MCF 10A (cell line): ENCODE measurements at regions of chr3 and their contacts with region 1.

Region 1: GRCh38 chr3:88113311-88114162 is 36.2 kb upstream of the C3orf38 start:
- DNase-seq: peak; percentile 81
- H3K4me3 Mint-ChIP-seq: no peak overlapping the region
- H3K27ac Mint-ChIP-seq: peak overlapping the region; percentile 23
- H3K4me1 Mint-ChIP-seq: peaks cover 17% of the 10 kb centered on the region
- H3K27me3 Mint-ChIP-seq: no peaks in the 10 kb centered on the region
- CTCF ChIP-seq: peak; percentile 58

Region 2: DNA sequence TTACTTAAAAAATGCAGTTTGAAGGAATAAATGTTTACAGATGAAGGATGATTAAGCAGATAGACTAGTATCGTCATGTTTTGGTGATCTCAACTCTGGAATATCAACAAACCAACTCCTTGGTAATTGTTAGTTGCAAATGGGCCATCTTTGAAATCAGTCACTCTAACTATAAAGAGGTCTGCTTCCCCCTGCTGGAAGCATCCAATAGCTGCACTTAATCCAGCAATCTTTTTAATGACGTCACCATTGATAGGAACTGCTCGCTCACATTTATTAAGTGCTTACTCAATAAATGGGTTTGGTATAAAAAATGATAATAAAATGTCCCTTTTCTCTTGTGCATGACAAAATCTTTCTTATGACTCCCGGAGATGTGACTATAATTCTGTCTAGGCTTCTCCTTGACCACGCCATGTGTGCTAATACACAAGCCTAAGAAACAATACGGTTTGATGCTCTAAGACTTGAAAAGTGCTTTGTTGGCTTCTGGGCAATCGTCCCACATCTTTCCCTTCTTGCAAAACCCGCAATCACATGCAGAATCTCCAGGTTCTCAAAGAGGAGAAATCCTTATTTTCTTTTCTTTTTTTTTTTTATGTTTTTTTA is 609.5 kb before region 1 on chr3:
- CTCF ChIA-PET with region 1: interaction called, 3 read pairs
- POLR2A ChIA-PET with region 1: no interaction called
- intact Hi-C with region 1: loop called (anchors 10 kb)
- DNase-seq: peak; percentile 81
- H3K4me3 Mint-ChIP-seq: no peak overlapping the region
- H3K27ac Mint-ChIP-seq: no peak overlapping the region
- H3K4me1 Mint-ChIP-seq: no peaks in the 10 kb centered on the region
- H3K27me3 Mint-ChIP-seq: no peaks in the 10 kb centered on the region
- CTCF ChIP-seq: peak; percentile 70

Region 3: DNA sequence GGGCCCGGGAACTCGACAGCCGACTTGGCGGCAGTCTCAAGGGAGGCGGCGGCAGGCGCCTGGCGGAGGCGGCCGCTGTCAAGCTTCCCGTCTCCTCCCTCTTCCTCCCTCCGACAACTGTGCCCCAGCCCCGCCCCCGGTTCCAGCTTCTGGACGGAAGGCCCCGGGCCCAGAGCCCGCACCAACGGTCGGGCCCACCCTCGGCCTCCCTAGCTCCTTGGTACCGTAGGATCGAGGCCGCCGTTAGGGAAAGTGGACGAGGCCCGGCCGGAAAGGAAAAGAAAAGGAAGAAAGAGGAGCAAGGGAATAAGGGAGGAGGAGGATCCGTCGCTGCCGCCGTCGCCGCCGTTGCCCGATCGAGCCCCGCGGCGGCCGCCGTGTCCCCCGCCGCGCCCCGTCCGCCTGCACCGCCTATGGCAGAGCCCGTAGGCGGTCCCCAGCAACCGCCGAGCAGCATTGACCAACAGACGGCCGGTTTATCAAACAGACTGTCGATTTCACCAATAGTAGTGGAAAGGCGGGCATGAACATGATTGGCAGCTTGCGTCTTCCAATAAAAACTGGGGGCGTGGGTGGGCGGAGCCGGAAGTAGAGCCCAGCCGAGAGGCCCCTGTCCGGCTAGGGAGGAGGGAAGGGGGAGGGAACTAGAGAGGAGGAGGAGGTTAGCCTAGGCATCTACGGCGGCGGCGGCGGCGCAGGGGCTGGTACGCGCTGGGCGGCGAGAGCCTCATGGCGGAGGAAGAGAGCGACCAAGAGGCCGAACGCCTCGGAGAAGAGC is 54.8 kb before region 1 on chr3 and contains the starts of genes CGGBP1 and ZNF654:
- CTCF ChIA-PET with region 1: interaction called, 5 read pairs
- POLR2A ChIA-PET with region 1: interaction called, 30 read pairs
- intact Hi-C with region 1: loop called (anchors 1 kb)
- DNase-seq: peak; percentile 99
- H3K4me3 Mint-ChIP-seq: peak within 1 kb of the TSS; percentile 97
- H3K27ac Mint-ChIP-seq: peak within 1 kb of the TSS; percentile 94
- H3K4me1 Mint-ChIP-seq: peaks cover 11% of the 10 kb centered on the region
- H3K27me3 Mint-ChIP-seq: no peaks in the 10 kb centered on the region
- CTCF ChIP-seq: no peak
- total RNA-seq, gene CGGBP1: 83.4 and 96.6 TPM in 2 replicates
- total RNA-seq, gene ZNF654: 10.4 and 12.4 TPM in 2 replicates

Region 4: DNA sequence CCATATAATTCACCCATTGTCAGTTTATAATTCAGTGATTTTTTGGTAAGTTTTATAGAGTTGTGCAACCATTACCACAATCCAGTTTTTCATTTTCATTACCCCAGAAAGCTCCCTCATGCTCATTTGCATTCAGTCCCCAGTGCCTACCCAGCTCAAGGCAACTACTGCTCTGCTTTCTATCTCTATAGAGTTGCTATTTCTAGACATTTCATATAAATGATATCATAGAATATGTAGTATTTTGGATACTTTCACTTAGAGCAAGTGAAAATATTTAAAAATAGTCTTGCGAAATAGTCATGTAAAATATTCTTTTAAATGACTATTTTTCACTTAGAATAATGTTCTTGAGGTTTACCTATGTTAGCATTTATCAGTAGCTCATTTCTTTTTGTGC is 12.4 kb before region 1 on chr3:
- CTCF ChIA-PET with region 1: interaction called, 12 read pairs
- POLR2A ChIA-PET with region 1: no interaction called
- intact Hi-C with region 1: no loop called
- DNase-seq: no peak
- H3K4me3 Mint-ChIP-seq: no peak overlapping the region
- H3K27ac Mint-ChIP-seq: no peak overlapping the region
- H3K4me1 Mint-ChIP-seq: peaks cover 11% of the 10 kb centered on the region
- H3K27me3 Mint-ChIP-seq: no peaks in the 10 kb centered on the region
- CTCF ChIP-seq: no peak

Region 5: GRCh38 chr3:88896026-88896425 is 782.5 kb after region 1 on chr3:
- CTCF ChIA-PET with region 1: no interaction called
- POLR2A ChIA-PET with region 1: no interaction called
- intact Hi-C with region 1: no loop called
- DNase-seq: peak; percentile 5
- H3K4me3 Mint-ChIP-seq: no peak overlapping the region
- H3K27ac Mint-ChIP-seq: no peak overlapping the region
- H3K4me1 Mint-ChIP-seq: no peaks in the 10 kb centered on the region
- H3K27me3 Mint-ChIP-seq: no peaks in the 10 kb centered on the region
- CTCF ChIP-seq: no peak